Ovary (tissue), 10 donors: ENCODE measurements at regions of chr12 and their contacts with region 1.

Region 1: GRCh38 chr12:76836633-76837032 is 42.2 kb downstream of the CSRP2 start:
- DNase-seq: no peak
- H3K4me3 ChIP-seq: no peak overlapping the region
- H3K27ac ChIP-seq: no peak overlapping the region
- H3K4me1 ChIP-seq: no peaks in the 10 kb centered on the region
- H3K27me3 ChIP-seq: no peaks in the 10 kb centered on the region
- CTCF ChIP-seq: no peak
- EP300 ChIP-seq: no peak
- POLR2A ChIP-seq: no peak

Region 2: GRCh38 chr12:76259660-76260389 is 576.8 kb before region 1 on chr12:
- intact Hi-C with region 1: no loop called
- DNase-seq: no peak
- H3K4me3 ChIP-seq: no peak overlapping the region
- H3K27ac ChIP-seq: no peak overlapping the region
- H3K4me1 ChIP-seq: no peaks in the 10 kb centered on the region
- H3K27me3 ChIP-seq: no peaks in the 10 kb centered on the region
- CTCF ChIP-seq: no peak
- EP300 ChIP-seq: no peak
- POLR2A ChIP-seq: no peak

Region 3: GRCh38 chr12:76799362-76799761 is 37.3 kb before region 1 on chr12:
- intact Hi-C with region 1: no loop called
- DNase-seq: no peak
- H3K4me3 ChIP-seq: no peak overlapping the region
- H3K27ac ChIP-seq: no peak overlapping the region
- H3K4me1 ChIP-seq: no peaks in the 10 kb centered on the region
- H3K27me3 ChIP-seq: no peaks in the 10 kb centered on the region
- CTCF ChIP-seq: no peak
- EP300 ChIP-seq: no peak
- POLR2A ChIP-seq: no peak

Region 4: GRCh38 chr12:78090266-78090665 is 1253.6 kb after region 1 on chr12:
- intact Hi-C with region 1: loop called in 1 of 4 experiments (anchors 5 kb)
- DNase-seq: no peak
- H3K4me3 ChIP-seq: no peak overlapping the region
- H3K27ac ChIP-seq: no peak overlapping the region
- H3K4me1 ChIP-seq: peaks cover 1% of the 10 kb centered on the region
- H3K27me3 ChIP-seq: no peaks in the 10 kb centered on the region
- CTCF ChIP-seq: no peak
- EP300 ChIP-seq: no peak
- POLR2A ChIP-seq: no peak